Tibial artery (tissue), 4 donors: ENCODE measurements at regions of chr5 and their contacts with region 1.

Region 1: GRCh38 chr5:177454397-177455035 is 7.9 kb downstream of the PRR7 start:
- DNase-seq: peak; percentile 86 to 94
- H3K4me3 ChIP-seq: peak overlapping the region; percentile 56 to 62
- H3K27ac ChIP-seq: peak overlapping the region; percentile 62 to 79
- H3K4me1 ChIP-seq: peaks cover 0 to 45% (median 31%) of the 10 kb centered on the region in 4 donors
- H3K27me3 ChIP-seq: peaks cover 0 to 32% of the 10 kb centered on the region in 2 donors
- CTCF ChIP-seq: peak; percentile 94 to 97

Region 2: DNA sequence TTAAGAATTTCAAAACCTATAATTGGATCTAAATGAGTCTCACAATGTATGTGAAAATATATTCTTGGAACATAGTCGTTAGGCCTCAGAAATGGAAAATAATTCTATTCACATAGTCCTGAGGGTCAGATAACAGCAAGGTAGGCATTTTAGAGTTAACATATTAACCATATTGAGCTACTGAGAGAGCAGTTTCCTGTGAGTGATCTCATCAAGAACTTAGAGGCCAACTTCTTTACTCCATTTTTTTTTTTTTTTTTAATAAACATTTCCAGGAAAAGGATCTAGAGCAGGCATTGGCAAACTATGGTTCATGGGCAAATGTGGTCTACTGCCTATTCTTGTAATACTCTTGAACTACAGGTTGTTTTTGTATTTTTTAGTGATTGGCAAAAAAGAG is 177.6 kb before region 1 on chr5:
- intact Hi-C with region 1: no loop called
- DNase-seq: no peak
- H3K4me3 ChIP-seq: no peak overlapping the region
- H3K27ac ChIP-seq: no peak overlapping the region
- H3K4me1 ChIP-seq: no peaks in the 10 kb centered on the region
- H3K27me3 ChIP-seq: no peaks in the 10 kb centered on the region
- CTCF ChIP-seq: no peak

Region 3: GRCh38 chr5:177390363-177391300 is 63.9 kb before region 1 on chr5:
- intact Hi-C with region 1: loop called (anchors 2 kb)
- DNase-seq: peak; percentile 72 to 86
- H3K4me3 ChIP-seq: no peak overlapping the region
- H3K27ac ChIP-seq: no peak overlapping the region
- H3K4me1 ChIP-seq: peaks cover 0 to 6% (median 0%) of the 10 kb centered on the region in 4 donors
- H3K27me3 ChIP-seq: peaks cover 0 to 40% of the 10 kb centered on the region in 2 donors
- CTCF ChIP-seq: peak; percentile 95 to 99

Region 4: GRCh38 chr5:177403792-177404640 is 50.5 kb before region 1 on chr5:
- intact Hi-C with region 1: loop called (anchors 2 kb)
- DNase-seq: peak; percentile 84 to 91
- H3K4me3 ChIP-seq: peak overlapping the region; percentile 43 to 60
- H3K27ac ChIP-seq: no peak overlapping the region
- H3K4me1 ChIP-seq: peaks cover 0 to 38% (median 34%) of the 10 kb centered on the region in 4 donors
- H3K27me3 ChIP-seq: peaks cover 7 to 63% of the 10 kb centered on the region in 2 donors
- CTCF ChIP-seq: peak; percentile 81 to 87

Region 5: DNA sequence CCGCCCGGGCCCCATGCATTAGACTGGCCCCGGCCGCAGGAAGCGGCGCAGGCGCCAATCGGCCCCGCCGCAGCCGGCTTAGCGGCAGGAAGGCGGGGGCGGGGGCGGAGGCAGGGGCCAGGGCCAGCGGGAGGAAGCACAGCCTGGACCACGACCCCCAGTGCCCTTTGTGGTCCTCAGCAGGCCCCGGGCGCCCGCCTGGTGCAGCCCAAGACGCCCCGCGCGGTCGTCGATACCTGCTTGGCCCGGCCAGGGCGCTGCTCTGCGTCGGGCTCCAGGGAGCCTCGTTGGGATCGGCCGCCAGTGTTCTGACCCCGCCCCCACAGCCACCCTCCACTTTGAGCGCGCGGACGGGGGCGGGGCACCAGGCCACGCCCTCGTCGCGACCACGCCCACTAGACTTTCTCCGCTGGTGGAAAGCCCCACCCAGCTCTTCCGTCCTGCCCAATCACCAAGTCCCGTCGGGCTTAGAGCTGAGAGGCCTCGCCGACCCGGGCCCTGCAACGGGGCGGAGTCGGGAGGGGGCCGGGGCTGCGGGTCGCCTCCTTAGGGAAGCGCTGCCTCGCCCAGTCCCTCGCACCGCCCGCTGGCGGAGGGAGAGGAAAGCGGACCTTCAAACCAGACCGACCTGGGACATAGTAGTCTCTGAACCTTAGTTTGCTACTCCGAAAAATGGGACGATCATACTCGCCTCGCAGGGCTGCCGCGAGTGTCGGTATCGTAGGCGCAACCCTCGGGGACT is 42.9 kb after region 1 on chr5 and contains the start of gene PDLIM7:
- intact Hi-C with region 1: loop called (anchors 2 kb)
- DNase-seq: peak; percentile 96 to 99
- H3K4me3 ChIP-seq: peak within 1 kb of the TSS; percentile 83 to 100
- H3K27ac ChIP-seq: peak within 1 kb of the TSS; percentile 92 to 100
- H3K4me1 ChIP-seq: peaks cover 7 to 58% (median 50%) of the 10 kb centered on the region in 4 donors
- H3K27me3 ChIP-seq: no peaks in the 10 kb centered on the region
- CTCF ChIP-seq: peak in 1 of 2 experiments; percentile 1

Region 6: GRCh38 chr5:177554474-177555111 is 100.1 kb after region 1 on chr5 and contains the start of gene FAM193B:
- intact Hi-C with region 1: no loop called
- DNase-seq: peak; percentile 91 to 95
- H3K4me3 ChIP-seq: peak within 1 kb of the TSS; percentile 98 to 100
- H3K27ac ChIP-seq: peak within 1 kb of the TSS; percentile 92 to 95
- H3K4me1 ChIP-seq: peaks cover 0 to 36% (median 18%) of the 10 kb centered on the region in 4 donors
- H3K27me3 ChIP-seq: no peaks in the 10 kb centered on the region
- CTCF ChIP-seq: peak in 1 of 2 experiments; percentile 31

Region 7: DNA sequence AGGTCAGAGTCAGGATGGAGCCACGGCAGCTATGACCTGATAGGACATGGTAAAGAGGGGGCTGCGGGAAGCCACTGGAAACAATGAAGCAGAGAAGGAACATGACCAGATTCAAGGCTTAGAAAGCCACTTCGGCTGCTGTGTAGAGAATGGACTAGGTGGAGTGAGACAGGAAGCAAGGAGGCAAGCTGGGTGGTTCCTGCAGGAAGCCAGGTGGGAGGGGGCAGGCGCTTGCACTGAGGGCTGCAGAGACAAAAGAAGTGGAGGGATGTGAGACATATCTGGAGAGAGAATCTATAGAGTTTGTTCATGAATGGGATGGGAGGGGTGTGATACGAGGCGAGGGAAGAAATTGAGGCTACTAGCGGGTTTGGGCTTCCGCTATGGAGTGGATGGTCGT is 639.8 kb after region 1 on chr5:
- intact Hi-C with region 1: no loop called
- DNase-seq: no peak
- H3K4me3 ChIP-seq: no peak overlapping the region
- H3K27ac ChIP-seq: no peak overlapping the region
- H3K4me1 ChIP-seq: no peaks in the 10 kb centered on the region
- H3K27me3 ChIP-seq: peaks cover 0 to 8% of the 10 kb centered on the region in 2 donors
- CTCF ChIP-seq: no peak